ENCODE measurements at regions of chr5 and their contacts with region 1.

Region 1: GRCh38 chr5:7886849-7887475 is 18.0 kb downstream of the MTRR start:
- DNase-seq: peak; percentile 44
- H3K4me3 ChIP-seq: no peak overlapping the region
- H3K27ac ChIP-seq: no peak overlapping the region
- H3K4me1 ChIP-seq: no peaks in the 10 kb centered on the region
- H3K27me3 ChIP-seq: no peaks in the 10 kb centered on the region
- CTCF ChIP-seq: peak; percentile 21 to 28
- POLR2A ChIP-seq: no peak

Region 2: GRCh38 chr5:7850395-7851239 is 36.3 kb before region 1 on chr5 and contains the start of gene CFAP90:
- CTCF ChIA-PET with region 1: no interaction called
- POLR2A ChIA-PET with region 1: no interaction called
- dilution Hi-C with region 1: no loop called
- intact Hi-C with region 1: no loop called
- DNase-seq: peak; percentile 40
- H3K4me3 ChIP-seq: peak within 1 kb of the TSS in 1 of 3 experiments; percentile 45
- H3K27ac ChIP-seq: no peak within 1 kb of the TSS
- H3K4me1 ChIP-seq: no peaks in the 10 kb centered on the region
- H3K27me3 ChIP-seq: peaks cover 21 to 22% of the 10 kb centered on the region in 2 experiments
- CTCF ChIP-seq: peak; percentile 22 to 62
- POLR2A ChIP-seq: no peak
- total RNA-seq, gene CFAP90: not detected in 2 replicates

Region 3: GRCh38 chr5:7868773-7869473 is 18.0 kb before region 1 on chr5 and contains the starts of genes FASTKD3 and MTRR:
- CTCF ChIA-PET with region 1: interaction called, 21 read pairs
- POLR2A ChIA-PET with region 1: interaction called, 3 read pairs
- dilution Hi-C with region 1: no loop called
- intact Hi-C with region 1: no loop called
- DNase-seq: peak; percentile 94
- H3K4me3 ChIP-seq: peak within 1 kb of the TSS; percentile 83 to 100 (median 93)
- H3K27ac ChIP-seq: peak within 1 kb of the TSS; percentile 44
- H3K4me1 ChIP-seq: peaks cover 18% of the 10 kb centered on the region
- H3K27me3 ChIP-seq: no peaks in the 10 kb centered on the region
- CTCF ChIP-seq: no peak
- POLR2A ChIP-seq: peak; percentile 87
- total RNA-seq, gene FASTKD3: 8.7 and 9.6 TPM in 2 replicates
- total RNA-seq, gene MTRR: 33.8 and 37.1 TPM in 2 replicates

Region 4: DNA sequence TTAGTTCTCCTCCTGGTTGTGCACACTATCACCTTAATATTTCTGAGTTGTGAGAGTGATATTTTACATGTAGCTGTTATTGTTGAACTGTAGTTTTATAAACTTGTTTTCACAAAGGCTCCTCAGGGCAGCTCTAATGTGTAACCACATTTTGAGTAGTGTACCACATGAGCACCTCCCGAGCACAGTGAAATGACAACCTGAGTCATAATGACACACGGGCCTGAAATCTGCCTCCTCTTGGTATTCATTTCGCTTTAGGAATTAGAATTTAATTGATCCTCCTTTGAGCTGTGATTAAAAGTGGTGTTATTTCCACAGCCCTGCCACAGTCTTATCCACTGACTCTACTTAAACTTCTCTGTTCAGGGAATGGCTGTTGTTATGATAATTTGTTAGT is 10.1 kb before region 1 on chr5:
- CTCF ChIA-PET with region 1: interaction called, 21 read pairs
- POLR2A ChIA-PET with region 1: no interaction called
- dilution Hi-C with region 1: no loop called
- intact Hi-C with region 1: no loop called
- DNase-seq: no peak
- H3K4me3 ChIP-seq: no peak overlapping the region
- H3K27ac ChIP-seq: no peak overlapping the region
- H3K4me1 ChIP-seq: no peaks in the 10 kb centered on the region
- H3K27me3 ChIP-seq: no peaks in the 10 kb centered on the region
- CTCF ChIP-seq: no peak
- POLR2A ChIP-seq: no peak

Region 5: DNA sequence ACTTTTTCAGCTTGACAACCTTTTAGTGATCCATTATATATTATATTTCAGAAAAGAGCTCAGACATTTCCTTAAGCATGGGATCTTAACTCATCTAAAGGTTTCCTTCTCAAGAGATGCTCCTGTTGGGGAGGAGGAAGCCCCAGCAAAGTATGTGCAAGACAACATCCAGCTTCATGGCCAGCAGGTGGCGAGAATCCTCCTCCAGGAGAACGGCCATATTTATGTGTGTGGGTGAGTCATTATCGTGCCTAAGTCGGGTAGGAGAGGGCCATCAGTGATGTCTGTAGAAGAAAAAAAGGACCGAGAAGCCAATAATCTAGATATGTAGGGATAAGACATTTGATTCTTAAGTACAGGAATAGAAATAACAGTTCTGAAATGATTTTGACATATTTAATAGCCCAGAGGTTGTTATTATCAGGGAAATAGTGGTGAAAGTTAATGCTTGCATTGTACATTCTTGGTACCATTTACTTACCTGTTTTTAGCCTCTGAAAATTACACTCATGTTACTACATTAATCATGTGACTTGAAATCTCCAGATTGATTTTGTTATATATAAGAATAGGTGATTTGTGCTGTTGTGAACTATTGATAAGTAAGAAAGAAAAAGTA is 10.2 kb after region 1 on chr5:
- CTCF ChIA-PET with region 1: interaction called, 17 read pairs
- POLR2A ChIA-PET with region 1: no interaction called
- dilution Hi-C with region 1: no loop called
- intact Hi-C with region 1: no loop called
- DNase-seq: peak; percentile 44
- H3K4me3 ChIP-seq: no peak overlapping the region
- H3K27ac ChIP-seq: no peak overlapping the region
- H3K4me1 ChIP-seq: no peaks in the 10 kb centered on the region
- H3K27me3 ChIP-seq: no peaks in the 10 kb centered on the region
- CTCF ChIP-seq: peak; percentile 47 to 48
- POLR2A ChIP-seq: no peak

Measured in endothelial cell of umbilical vein (primary cell).